Activated CD4-positive, alpha-beta T cell treated with anti-CD3 and anti-CD28 coated beads, Interleukin-2, amount 10 ng/mL, durations not matched to agents 7 days and 5 days (primary cell): ENCODE measurements at regions of chr15 and their contacts with region 1.

Region 1: GRCh38 chr15:43285609-43286037 is 18.9 kb upstream of the TGM5 start:
- DNase-seq: peak; percentile 77
- H3K4me3 Mint-ChIP-seq: no peak overlapping the region
- H3K27ac Mint-ChIP-seq: no peak overlapping the region
- H3K4me1 Mint-ChIP-seq: peaks cover 11% of the 10 kb centered on the region
- H3K27me3 Mint-ChIP-seq: peaks cover 9% of the 10 kb centered on the region

Region 2: GRCh38 chr15:42324308-42324707 is 961.3 kb before region 1 on chr15:
- CTCF ChIA-PET with region 1: no interaction called
- POLR2A ChIA-PET with region 1: no interaction called
- DNase-seq: no peak
- H3K4me3 Mint-ChIP-seq: no peak overlapping the region
- H3K27ac Mint-ChIP-seq: no peak overlapping the region
- H3K4me1 Mint-ChIP-seq: no peaks in the 10 kb centered on the region
- H3K27me3 Mint-ChIP-seq: no peaks in the 10 kb centered on the region

Region 3: GRCh38 chr15:43204016-43204901 is 81.4 kb before region 1 on chr15:
- CTCF ChIA-PET with region 1: interaction called, 12 read pairs
- POLR2A ChIA-PET with region 1: no interaction called
- DNase-seq: peak; percentile 60
- H3K4me3 Mint-ChIP-seq: no peak overlapping the region
- H3K27ac Mint-ChIP-seq: no peak overlapping the region
- H3K4me1 Mint-ChIP-seq: peaks cover 7% of the 10 kb centered on the region
- H3K27me3 Mint-ChIP-seq: peaks cover 3% of the 10 kb centered on the region